ENCODE measurements at regions of chr14 and their contacts with region 1.

Region 1: GRCh38 chr14:102200690-102201352 is 61.1 kb downstream of the WDR20 start:
- DNase-seq: peak; percentile 20
- H3K4me3 Mint-ChIP-seq: no peak overlapping the region
- H3K27ac Mint-ChIP-seq: peak overlapping the region; percentile 2
- H3K4me1 Mint-ChIP-seq: peaks cover 61% of the 10 kb centered on the region
- H3K27me3 Mint-ChIP-seq: no peaks in the 10 kb centered on the region

Region 2: GRCh38 chr14:101809671-101810514 is 390.9 kb before region 1 on chr14:
- CTCF ChIA-PET with region 1: no interaction called
- intact Hi-C with region 1: no loop called
- DNase-seq: peak; percentile 94
- H3K4me3 Mint-ChIP-seq: peak overlapping the region; percentile 83
- H3K27ac Mint-ChIP-seq: peak overlapping the region; percentile 95
- H3K4me1 Mint-ChIP-seq: peaks cover 42% of the 10 kb centered on the region
- H3K27me3 Mint-ChIP-seq: no peaks in the 10 kb centered on the region

Region 3: DNA sequence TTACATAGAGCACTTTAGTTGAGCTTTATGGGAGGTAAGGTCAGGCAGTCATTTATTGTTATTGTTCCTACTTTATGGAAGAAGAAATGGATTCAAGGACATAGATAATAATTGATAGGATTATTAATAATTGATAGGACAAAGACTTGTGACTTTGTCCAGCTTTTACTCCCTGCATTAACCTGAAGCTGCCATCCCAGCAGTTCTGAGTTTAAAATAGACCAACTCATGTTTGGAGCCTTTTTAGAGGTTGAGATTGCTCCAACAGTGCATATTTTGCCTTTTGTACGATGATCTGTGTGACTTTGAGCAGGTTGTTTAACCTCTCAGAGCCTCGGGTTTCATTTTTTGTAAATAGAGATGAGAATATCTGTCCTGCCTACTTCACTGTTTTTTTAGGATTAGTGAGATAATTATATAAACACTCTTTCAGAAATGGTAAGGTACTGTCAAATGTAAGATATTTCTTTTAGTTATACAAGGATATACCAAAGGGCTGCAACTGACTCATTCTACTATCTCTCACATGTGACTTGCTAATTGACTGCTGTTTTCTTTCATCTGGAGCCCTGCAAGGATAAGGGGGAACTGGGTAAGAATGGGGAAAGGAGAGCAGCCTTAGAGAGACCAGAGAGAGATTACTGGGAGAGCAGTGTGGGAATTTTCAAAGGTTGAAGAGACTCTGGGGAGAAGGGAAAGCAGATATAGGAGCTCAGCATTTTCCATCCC is 45.8 kb before region 1 on chr14:
- CTCF ChIA-PET with region 1: no interaction called
- intact Hi-C with region 1: no loop called
- DNase-seq: no peak
- H3K4me3 Mint-ChIP-seq: no peak overlapping the region
- H3K27ac Mint-ChIP-seq: no peak overlapping the region
- H3K4me1 Mint-ChIP-seq: peaks cover 50% of the 10 kb centered on the region
- H3K27me3 Mint-ChIP-seq: no peaks in the 10 kb centered on the region

Region 4: DNA sequence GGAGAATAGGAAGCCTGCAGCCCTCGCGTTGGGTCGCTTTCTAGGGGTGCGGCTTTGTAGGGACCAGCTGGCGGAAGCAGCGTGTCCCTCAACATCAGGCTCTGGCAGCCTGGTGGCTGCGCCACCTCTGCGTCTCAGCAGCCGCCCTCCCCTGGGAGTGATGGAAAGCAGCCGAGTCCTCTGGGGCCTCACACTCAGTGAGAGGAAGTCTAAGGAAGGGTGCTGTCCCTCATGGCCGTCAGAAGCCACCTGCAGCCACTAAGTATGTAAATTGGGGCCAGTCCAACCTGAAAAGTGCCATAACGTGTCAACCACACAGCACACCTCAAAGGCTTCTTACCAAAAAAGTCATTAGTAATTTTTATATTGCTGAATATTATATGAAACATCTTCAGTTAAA is 19.2 kb after region 1 on chr14:
- CTCF ChIA-PET with region 1: no interaction called
- intact Hi-C with region 1: loop called (anchors 1 kb)
- DNase-seq: peak; percentile 69
- H3K4me3 Mint-ChIP-seq: no peak overlapping the region
- H3K27ac Mint-ChIP-seq: no peak overlapping the region
- H3K4me1 Mint-ChIP-seq: peaks cover 13% of the 10 kb centered on the region
- H3K27me3 Mint-ChIP-seq: no peaks in the 10 kb centered on the region

Measured in activated naive CD4-positive, alpha-beta T cell treated with anti-CD3 and anti-CD28 coated beads for 36 hours (primary cell).